ENCODE measurements at regions of chr9 and their contacts with region 1.

Region 1: DNA sequence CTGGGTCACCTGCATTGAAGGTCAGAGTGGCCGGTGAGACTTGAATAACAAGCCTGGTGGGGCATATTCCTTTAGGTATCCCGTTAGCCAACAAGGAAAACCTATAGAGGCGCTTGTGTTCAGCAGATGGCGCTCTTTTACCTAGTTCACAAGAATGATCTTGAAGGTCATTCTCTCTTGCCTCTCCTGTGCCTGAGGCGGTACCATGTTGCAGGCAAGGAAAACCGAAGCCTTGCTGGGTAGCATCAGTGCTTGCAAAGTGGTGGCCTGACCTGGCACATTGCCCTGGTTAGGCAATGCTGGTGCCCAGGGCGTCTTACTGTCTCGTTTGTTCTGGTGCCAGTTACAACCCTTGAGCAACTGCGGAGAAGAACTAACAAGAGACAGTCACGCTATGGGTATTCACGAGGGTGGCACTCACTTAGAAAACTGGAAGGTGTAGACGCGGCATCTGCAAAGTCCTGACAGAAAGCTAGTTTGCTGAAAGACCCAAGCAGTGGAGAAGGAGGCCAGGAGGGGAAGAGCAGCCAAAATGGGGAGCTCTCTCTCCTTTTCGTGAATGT is 56.7 kb downstream of the AOPEP start:
- DNase-seq: peak; percentile 94 to 96
- H3K4me3 ChIP-seq: no peak overlapping the region
- CTCF ChIP-seq: no peak
- POLR2A ChIP-seq: no peak

Region 2: DNA sequence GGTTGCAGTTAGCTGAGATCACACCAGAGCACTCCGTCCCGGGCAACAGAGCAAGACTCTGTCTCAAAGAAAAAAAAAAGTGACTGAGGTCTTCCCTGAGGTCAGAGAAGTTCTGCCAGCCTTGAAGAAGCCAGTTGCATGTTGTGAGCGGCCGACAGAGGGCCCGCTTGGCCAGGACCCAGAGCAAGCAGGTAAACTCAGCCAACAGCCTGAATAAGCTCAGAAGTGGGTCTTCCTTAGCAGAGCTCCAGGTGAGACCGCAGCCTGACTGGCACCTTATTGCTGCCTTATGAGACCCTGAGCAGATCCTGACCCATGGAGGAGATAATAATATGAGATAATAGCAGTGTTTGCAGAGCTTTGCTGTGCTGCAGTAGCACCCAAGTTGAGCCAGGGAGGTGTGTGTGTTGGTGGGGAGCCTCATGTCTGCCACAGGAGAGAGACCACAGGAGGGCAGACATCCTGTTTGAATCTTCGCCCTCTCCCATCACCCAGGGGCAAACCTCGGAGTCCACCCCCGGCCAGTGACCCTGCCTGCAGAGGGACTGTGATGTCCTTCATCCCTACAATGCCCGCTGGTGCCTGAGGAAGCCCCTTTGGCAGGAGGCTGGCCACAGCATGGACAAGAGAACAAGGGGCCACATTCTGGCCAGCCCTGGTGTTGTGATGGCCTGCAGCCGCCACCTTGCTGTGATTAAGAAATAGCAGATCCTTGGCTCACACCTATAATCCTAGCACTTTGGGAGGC is 817.2 kb before region 1 on chr9:
- intact Hi-C with region 1: no loop called
- DNase-seq: no peak
- H3K4me3 ChIP-seq: no peak overlapping the region
- CTCF ChIP-seq: no peak
- POLR2A ChIP-seq: no peak

Region 3: DNA sequence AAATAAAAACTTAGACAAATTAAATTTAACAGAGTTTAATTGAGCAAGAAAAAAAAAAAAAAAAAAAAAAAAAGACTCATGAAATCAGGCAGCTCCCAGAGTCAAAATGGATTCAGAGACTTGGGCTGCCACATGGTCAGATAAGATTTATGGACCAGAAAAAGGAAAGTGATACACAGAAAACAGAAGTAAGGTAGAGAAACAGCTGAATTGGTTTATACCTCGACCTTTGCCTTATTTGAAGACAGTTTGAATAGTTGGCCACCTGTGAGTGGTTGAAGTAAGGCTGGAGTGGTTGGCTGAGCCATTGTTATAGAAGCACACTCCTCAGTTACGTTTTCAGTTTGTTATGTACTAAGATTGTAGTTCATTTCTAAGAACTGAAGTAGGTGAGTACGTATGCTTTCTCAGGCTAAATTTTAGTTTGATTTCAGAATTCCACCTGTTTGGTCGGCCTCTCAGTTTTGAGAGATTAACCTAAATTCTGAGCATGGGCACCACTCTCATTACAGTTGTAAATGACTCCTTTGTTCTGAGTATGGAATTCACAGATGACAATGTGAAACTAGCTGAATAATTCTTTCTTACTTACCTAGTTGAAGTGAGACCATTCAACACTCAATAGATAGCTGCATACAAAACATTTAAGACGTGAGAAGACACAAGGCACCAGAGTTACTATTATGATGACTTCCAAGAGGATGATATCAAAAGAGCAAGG is 92.3 kb after region 1 on chr9:
- intact Hi-C with region 1: no loop called
- DNase-seq: no peak
- H3K4me3 ChIP-seq: no peak overlapping the region
- CTCF ChIP-seq: no peak
- POLR2A ChIP-seq: no peak

Region 4: DNA sequence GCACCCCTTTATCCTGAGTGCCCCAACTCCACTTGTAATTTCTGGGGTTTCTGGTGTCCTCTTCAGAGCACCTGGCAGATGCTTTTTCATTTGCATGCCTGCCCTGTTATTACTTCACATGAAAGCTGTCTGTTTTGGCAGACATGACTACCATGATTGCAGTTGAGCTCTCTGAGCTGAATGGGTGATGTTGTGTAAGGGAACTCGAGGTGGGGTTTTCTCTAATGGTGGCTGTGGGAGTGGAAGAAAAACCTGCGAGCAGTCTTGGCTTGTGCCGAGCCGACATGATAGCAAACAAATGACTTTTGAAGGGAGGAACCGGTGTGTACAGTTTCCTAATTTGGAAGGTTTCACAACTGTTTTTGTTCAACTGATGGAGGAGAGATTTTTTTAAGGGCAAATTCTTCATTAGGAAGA is 139.5 kb after region 1 on chr9:
- intact Hi-C with region 1: no loop called
- DNase-seq: peak in 1 of 2 donors; percentile 78
- H3K4me3 ChIP-seq: no peak overlapping the region
- CTCF ChIP-seq: no peak
- POLR2A ChIP-seq: no peak

Region 5: GRCh38 chr9:95004411-95005277 is 221.5 kb after region 1 on chr9:
- intact Hi-C with region 1: loop called (anchors 10 kb)
- DNase-seq: no peak
- H3K4me3 ChIP-seq: peak overlapping the region; percentile 72
- CTCF ChIP-seq: no peak
- POLR2A ChIP-seq: no peak

Region 6: DNA sequence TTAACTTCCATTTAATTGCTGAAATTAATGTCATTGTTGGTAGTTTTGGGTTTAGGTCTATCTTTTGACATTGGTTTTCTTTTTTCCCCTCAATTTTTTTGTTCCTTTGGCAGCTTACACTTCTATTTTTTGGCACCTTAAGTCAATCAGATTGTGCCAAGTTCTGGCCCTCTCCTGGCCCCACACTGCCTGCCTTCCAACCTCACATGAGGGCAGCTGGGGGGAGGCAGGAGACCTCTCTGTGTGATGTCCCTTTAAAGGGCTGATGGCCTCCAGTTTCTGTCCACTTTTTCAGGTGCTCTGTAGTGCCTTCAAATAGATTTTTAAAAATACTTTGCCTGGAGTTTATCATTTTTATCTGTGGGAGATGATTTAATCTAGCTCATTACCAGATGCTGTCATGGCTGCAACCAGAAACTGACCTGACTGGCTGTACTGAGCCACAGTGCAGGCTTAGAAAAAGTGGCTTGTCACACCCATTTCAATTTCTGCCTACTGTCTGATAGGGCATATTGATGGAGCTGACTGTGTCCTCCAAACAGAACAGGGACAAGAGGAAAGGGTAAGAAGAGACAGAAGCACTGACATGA is 337.7 kb after region 1 on chr9:
- intact Hi-C with region 1: loop called (anchors 2 kb)
- DNase-seq: peak in 1 of 2 donors; percentile 74
- H3K4me3 ChIP-seq: no peak overlapping the region
- CTCF ChIP-seq: no peak
- POLR2A ChIP-seq: no peak

Region 7: DNA sequence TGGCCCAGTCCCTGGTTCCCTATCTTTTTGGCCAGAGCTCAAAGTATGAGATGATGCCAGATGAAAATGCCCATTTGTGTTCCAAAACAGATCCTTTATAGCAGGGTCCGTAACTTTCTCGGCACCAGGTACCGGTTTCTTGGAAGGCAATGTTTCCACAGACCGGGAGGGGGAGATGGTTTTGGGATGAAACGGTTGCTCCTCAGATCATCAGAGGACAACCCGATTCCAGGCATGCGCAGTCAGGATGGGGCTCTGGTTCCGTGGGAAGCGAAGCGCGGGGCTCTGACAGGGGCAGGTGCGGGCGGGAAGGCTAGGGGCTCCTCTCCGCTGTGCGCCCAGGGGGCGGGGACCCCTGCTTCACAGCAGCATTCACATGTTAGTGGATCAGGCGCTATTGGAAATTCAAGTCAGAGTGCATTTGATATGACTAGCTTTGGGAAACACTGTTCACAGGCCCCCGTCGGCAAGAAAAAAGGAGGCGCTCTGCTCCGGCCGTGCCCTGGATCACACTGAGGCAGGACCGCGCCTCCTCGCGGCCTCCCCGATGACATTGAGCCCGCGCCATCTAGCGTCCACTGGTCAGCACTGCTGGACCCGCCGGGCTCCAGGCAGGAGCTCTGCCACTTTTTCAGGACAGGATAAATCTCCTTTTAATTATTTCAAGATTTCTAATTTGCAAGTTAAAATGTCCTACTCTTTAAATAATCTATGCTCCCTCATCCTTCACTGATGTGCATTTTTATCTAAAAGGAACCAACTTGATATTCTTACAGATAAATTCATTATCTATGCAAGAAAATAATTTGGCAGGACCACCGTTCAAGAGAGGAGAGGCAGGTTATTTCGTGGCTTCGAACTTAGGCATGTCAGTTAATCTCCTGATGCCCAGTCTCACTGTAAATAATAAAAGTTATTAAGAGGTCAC is 344.3 kb after region 1 on chr9:
- intact Hi-C with region 1: loop called (anchors 2 kb)
- DNase-seq: peak; percentile 80 to 97
- H3K4me3 ChIP-seq: no peak overlapping the region
- CTCF ChIP-seq: peak in 1 of 3 donors; percentile 80
- POLR2A ChIP-seq: no peak

Measured in lower leg skin (tissue), 4 donors.